Astrocyte of the cerebellum (primary cell): ENCODE measurements at regions of chr10 and their contacts with region 1.

Region 1: DNA sequence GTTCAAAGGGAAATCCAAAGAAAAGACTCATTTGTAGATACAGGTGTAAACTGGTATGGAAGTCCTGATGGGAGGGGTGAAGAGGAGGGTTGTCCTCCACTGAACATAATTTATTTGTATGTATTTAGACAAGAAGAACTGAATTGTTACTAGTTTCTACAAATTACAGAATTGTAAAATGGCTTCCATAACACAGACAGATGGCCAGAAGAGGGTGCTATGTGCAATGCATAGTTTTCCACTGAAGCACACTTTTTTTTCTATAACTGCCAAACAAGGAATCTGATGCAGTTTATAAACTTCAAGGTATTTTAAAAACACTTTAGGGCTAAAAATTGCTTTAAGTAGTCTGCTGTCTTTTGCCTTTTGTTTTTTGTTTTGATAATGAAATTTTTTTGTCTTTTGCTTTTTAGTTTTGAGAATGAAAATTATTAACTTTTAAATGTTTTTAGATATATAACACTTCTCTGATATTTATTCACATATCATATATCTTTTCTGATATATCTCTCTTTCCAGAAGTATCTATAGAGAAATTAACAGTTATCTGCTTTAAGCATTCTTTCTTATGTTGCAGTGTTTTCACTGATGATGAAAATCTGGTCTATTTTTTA is 58.5 kb downstream of the PHYHIPL start:
- DNase-seq: peak; percentile 37
- H3K4me3 ChIP-seq: no peak overlapping the region
- CTCF ChIP-seq: peak; percentile 63

Region 2: DNA sequence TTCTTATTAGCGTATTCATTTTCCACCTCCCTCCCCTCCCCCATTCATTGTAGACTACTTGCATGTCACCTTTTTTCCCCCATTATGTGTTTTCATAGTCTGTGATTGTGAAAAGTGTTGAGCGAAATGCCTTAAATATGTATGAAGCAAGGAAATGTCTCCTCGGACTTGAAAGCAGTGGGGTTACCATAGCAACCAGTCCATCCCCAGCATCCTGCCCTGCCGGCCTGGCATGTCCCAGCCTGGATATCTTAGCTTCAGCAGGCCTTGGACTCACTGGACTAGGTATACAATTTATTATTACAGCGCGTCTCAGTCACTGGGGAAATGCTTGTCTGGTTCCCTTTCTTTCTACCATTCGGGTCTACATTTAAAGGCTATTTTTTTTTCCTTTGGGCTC is 438.7 kb before region 1 on chr10:
- in situ Hi-C with region 1: no loop called
- DNase-seq: no peak
- H3K4me3 ChIP-seq: no peak overlapping the region
- CTCF ChIP-seq: no peak

Region 3: GRCh38 chr10:59177031-59177797 is 57.7 kb before region 1 on chr10:
- in situ Hi-C with region 1: no loop called
- DNase-seq: peak; percentile 86
- H3K4me3 ChIP-seq: peak overlapping the region; percentile 40
- CTCF ChIP-seq: no peak

Region 4: DNA sequence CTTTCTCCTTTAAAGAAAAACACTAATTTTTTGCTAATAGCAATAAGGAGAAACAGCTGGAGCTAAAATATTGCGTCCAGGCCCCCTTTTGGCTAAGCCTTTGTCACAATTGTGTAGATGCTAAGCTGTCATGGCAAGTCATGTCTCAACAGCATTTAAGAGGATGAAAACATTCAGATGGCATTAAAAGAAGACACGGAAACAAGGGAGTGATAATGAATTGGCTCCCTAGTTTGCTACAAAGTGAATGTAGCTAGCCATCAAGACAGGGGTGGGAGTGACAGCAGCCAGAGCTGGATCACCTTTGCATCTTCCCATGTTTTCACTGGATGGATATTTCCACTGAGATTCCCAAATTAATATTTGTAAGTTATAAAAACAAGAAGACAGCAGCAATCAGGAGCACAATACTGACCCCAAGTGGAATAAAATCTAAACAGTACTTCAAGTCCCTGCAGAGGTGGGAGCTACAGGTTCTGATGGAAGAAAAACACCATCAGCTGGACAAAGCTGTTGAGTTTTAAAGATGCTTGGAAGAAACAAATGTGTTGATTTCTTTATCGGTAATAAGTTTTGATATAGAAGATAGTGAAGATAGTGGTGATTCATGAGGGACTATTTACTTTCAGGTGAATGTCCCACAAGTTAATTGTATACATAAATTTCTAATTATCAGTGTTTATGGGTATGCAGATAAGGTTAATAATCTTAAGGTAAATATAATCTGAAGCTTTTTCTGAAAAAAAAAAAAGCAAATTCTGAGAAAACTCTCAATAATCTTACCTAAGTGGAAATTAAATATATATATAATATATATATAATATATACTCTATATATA is 345.3 kb after region 1 on chr10:
- in situ Hi-C with region 1: loop called (anchors 5 kb)
- DNase-seq: peak; percentile 49
- H3K4me3 ChIP-seq: no peak overlapping the region
- CTCF ChIP-seq: peak; percentile 47